ENCODE measurements at regions of chr11 and their contacts with region 1.

Region 1: GRCh38 chr11:123478352-123478987 is 48.4 kb downstream of the GRAMD1B start:
- DNase-seq: no peak
- H3K4me3 ChIP-seq: no peak overlapping the region
- H3K27ac ChIP-seq: no peak overlapping the region
- H3K4me1 ChIP-seq: no peaks in the 10 kb centered on the region
- H3K27me3 ChIP-seq: no peaks in the 10 kb centered on the region
- CTCF ChIP-seq: peak; percentile 34 to 65 (median 59)
- POLR2A ChIP-seq: no peak

Region 2: GRCh38 chr11:123030517-123030916 is 448.0 kb before region 1 on chr11:
- intact Hi-C with region 1: no loop called
- DNase-seq: no peak
- H3K4me3 ChIP-seq: no peak overlapping the region
- H3K27ac ChIP-seq: no peak overlapping the region
- H3K4me1 ChIP-seq: no peaks in the 10 kb centered on the region
- H3K27me3 ChIP-seq: no peaks in the 10 kb centered on the region
- CTCF ChIP-seq: no peak
- POLR2A ChIP-seq: no peak

Region 3: GRCh38 chr11:123103326-123103980 is 375.0 kb before region 1 on chr11:
- intact Hi-C with region 1: loop called (anchors 10 kb)
- DNase-seq: no peak
- H3K4me3 ChIP-seq: no peak overlapping the region
- H3K27ac ChIP-seq: peak overlapping the region; percentile 42
- H3K4me1 ChIP-seq: peaks cover 35% of the 10 kb centered on the region
- H3K27me3 ChIP-seq: no peaks in the 10 kb centered on the region
- CTCF ChIP-seq: peak; percentile 25 to 71 (median 64)
- POLR2A ChIP-seq: no peak

Region 4: GRCh38 chr11:123301696-123302400 is 176.6 kb before region 1 on chr11:
- intact Hi-C with region 1: loop called (anchors 5 kb)
- DNase-seq: no peak
- H3K4me3 ChIP-seq: peak overlapping the region; percentile 37 to 46
- H3K27ac ChIP-seq: no peak overlapping the region
- H3K4me1 ChIP-seq: peaks cover 13% of the 10 kb centered on the region
- H3K27me3 ChIP-seq: no peaks in the 10 kb centered on the region
- CTCF ChIP-seq: peak; percentile 46 to 88 (median 76)
- POLR2A ChIP-seq: no peak